Ovary (tissue), 10 donors: ENCODE measurements at regions of chr20 and their contacts with region 1.

Region 1: DNA sequence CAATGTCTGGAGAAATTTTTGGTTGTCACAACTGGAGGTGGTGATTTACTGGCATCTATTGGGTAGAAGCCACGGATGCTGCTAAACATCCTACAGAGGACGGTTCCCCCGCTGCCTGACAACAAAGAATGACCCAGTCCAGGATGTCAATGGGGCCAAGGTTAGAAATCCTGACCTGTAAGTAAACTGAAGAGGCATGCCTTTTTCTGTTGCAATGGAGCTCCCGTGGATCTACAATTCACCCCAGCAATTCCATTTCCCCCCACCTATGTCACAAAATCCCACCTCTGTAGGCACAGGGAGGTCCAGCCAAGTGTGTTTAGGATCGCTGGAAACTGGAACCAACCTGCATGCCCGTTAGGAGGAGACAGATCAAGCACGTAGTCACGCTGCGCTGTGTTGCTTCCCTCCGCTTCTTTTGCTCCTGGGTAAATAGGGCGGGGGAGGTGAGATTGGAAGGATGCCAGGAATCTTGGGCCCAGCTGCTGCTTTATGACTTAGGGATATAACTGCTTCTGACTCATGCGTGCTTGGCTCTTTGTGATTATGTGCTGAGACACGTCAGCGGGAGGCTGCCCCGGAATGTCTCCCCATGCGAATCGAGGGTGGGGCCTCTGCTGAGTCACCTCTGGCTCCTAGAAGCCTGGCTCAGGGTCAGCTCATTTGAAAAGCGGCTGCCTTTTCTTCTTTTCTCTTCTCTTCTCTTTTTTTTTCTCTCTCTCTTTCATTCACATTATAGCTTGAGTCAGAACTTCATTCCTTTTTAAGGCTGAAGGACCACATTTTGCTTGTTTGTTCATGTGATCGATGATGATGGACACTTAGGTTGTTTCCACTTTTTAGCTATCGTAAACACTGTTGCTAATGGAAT is 12.4 kb upstream of the PEDS1 start:
- DNase-seq: peak; percentile 95 to 99 (median 96)
- H3K4me3 ChIP-seq: peak overlapping the region; percentile 11
- H3K27ac ChIP-seq: peak overlapping the region; percentile 18 to 81
- H3K4me1 ChIP-seq: peaks cover 2% of the 10 kb centered on the region
- H3K27me3 ChIP-seq: no peaks in the 10 kb centered on the region
- CTCF ChIP-seq: no peak
- EP300 ChIP-seq: peak; percentile 84
- POLR2A ChIP-seq: no peak

Region 2: DNA sequence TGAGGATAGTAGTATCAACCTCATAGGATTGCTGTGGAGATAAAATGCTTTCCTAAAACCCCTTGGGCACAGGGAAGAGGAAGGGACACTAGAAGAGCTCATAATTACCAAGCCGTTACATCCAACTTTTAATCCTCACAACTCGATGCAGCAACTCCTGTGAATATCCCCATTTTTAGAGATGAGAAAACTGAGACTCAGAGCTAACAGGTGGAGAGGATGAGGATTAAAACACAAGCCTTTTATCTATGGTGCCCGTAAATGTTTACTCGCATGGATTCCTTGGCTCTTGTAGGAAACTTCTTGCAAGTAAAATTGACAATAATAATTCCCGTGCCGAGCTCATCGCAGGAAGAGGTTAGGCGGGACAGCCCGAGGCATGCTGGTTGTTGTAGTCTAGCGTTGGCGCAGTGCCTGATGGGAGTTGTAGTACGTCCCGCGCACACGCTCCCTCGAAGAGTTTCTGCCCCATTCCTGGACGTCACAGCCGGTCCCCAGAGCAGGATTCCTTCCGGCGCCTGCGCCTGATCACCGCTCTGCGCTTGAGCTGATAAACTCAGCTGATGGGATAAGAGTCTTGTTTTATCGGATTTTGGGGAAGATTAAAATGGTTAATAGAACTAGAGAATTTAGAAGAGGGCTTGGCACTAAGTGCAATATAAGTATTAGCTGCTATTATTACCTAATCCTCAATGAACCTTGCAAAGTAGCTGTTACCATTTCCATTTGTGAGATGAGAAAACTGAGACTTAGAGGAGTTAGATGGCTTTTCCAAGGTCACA is 50.1 kb before region 1 on chr20:
- intact Hi-C with region 1: loop called in 2 of 4 experiments (anchors 5 kb)
- DNase-seq: peak; percentile 96 to 98 (median 98)
- H3K4me3 ChIP-seq: peak overlapping the region; percentile 40
- H3K27ac ChIP-seq: peak overlapping the region in 1 of 2 donors; percentile 40
- H3K4me1 ChIP-seq: peaks cover 7% of the 10 kb centered on the region
- H3K27me3 ChIP-seq: no peaks in the 10 kb centered on the region
- CTCF ChIP-seq: no peak
- EP300 ChIP-seq: no peak
- POLR2A ChIP-seq: no peak

Region 3: DNA sequence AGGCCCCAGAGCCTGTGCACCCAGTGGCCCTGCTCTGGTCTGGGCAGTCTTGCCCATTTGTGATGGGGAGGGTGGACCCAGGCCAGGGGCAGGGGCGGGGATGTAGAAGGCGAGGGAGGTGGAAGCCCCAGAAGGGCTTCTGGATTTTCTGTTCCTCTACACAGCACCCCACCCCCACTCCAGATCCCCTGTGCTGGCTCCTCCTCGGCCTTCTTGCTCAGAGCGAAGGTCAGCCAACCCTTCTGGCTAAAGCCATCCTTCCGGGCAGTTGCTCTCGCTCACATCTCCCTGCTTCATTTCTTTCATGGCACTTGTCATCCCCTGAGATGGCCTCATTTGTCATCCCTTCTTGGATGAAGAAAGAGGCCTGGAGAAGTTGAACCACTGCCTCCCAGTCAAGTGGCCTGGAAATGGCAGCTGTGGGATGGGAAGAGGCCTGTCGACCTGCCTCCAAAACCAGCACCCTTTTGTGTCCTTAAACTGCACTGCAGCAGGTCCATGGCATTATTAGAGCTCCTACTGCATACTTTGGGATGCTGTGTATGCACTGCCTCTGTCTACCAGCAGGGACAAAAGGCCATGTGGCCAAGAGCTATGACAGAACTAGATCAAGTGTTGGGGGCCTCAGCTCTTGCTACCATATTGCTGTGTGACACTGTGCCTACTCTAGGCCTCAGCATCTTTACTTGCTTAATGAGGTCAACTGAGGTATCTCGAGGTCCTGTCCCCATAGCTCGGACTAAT is 32.3 kb before region 1 on chr20:
- intact Hi-C with region 1: loop called in 1 of 4 experiments (anchors 5 kb)
- DNase-seq: no peak
- H3K4me3 ChIP-seq: no peak overlapping the region
- H3K27ac ChIP-seq: no peak overlapping the region
- H3K4me1 ChIP-seq: peaks cover 6% of the 10 kb centered on the region
- H3K27me3 ChIP-seq: no peaks in the 10 kb centered on the region
- CTCF ChIP-seq: no peak
- EP300 ChIP-seq: no peak
- POLR2A ChIP-seq: no peak

Region 4: GRCh38 chr20:50744143-50744792 is 578.3 kb after region 1 on chr20:
- intact Hi-C with region 1: no loop called
- DNase-seq: peak; percentile 65 to 79 (median 74)
- H3K4me3 ChIP-seq: no peak overlapping the region
- H3K27ac ChIP-seq: peak overlapping the region; percentile 51 to 81
- H3K4me1 ChIP-seq: peaks cover 7% of the 10 kb centered on the region
- H3K27me3 ChIP-seq: no peaks in the 10 kb centered on the region
- CTCF ChIP-seq: peak in 2 of 3 donors; percentile 28 to 36
- EP300 ChIP-seq: no peak
- POLR2A ChIP-seq: no peak